SK-N-SH (cell line): ENCODE measurements at regions of chr12 and their contacts with region 1.

Region 1: GRCh38 chr12:107884769-107885694 is 110.5 kb downstream of the ASCL4 start:
- DNase-seq: peak; percentile 74
- H3K4me3 ChIP-seq: no peak overlapping the region
- H3K27ac ChIP-seq: no peak overlapping the region
- H3K4me1 ChIP-seq: peaks cover 0 to 2% of the 10 kb centered on the region in 2 experiments; a peak in 1 of 4 replicates
- H3K27me3 ChIP-seq: 0 out of 2 replicates have a peak, but pooled peaks cover 5% of the 10 kb centered on the region
- CTCF ChIP-seq: peak; percentile 88
- EP300 ChIP-seq: no peak
- RAD21 ChIP-seq: peak; percentile 91

Region 2: GRCh38 chr12:107670999-107671643 is 213.9 kb before region 1 on chr12:
- CTCF ChIA-PET with region 1: interaction called, 19 read pairs
- POLR2A ChIA-PET with region 1: interaction called, 5 read pairs
- DNase-seq: no peak
- H3K4me3 ChIP-seq: no peak overlapping the region
- H3K27ac ChIP-seq: no peak overlapping the region
- H3K4me1 ChIP-seq: peaks cover 0 to 6% of the 10 kb centered on the region in 2 experiments; a peak in 1 of 4 replicates
- H3K27me3 ChIP-seq: no peaks in the 10 kb centered on the region; the same call in 1 of the 2 replicates
- CTCF ChIP-seq: peak; percentile 37
- EP300 ChIP-seq: no peak
- RAD21 ChIP-seq: no peak

Region 3: GRCh38 chr12:107679336-107679735 is 205.7 kb before region 1 on chr12:
- CTCF ChIA-PET with region 1: interaction called, 19 read pairs
- POLR2A ChIA-PET with region 1: interaction called, 5 read pairs
- DNase-seq: no peak
- H3K4me3 ChIP-seq: no peak overlapping the region
- H3K27ac ChIP-seq: no peak overlapping the region
- H3K4me1 ChIP-seq: no peaks in the 10 kb centered on the region
- H3K27me3 ChIP-seq: peaks cover 11% of the 10 kb centered on the region; the same call in 1 of the 2 replicates
- CTCF ChIP-seq: no peak
- EP300 ChIP-seq: no peak
- RAD21 ChIP-seq: no peak

Region 4: GRCh38 chr12:107760809-107761501 is 124.1 kb before region 1 on chr12 and contains the start of gene PRDM4:
- CTCF ChIA-PET with region 1: interaction called, 68 read pairs
- POLR2A ChIA-PET with region 1: no interaction called
- DNase-seq: peak; percentile 99
- H3K4me3 ChIP-seq: peak within 1 kb of the TSS; percentile 82 to 89
- H3K27ac ChIP-seq: peak within 1 kb of the TSS; percentile 71 to 74
- H3K4me1 ChIP-seq: peaks cover 10 to 15% of the 10 kb centered on the region in 2 experiments; a peak in 2 of 4 replicates
- H3K27me3 ChIP-seq: no peaks in the 10 kb centered on the region
- CTCF ChIP-seq: peak; percentile 31
- EP300 ChIP-seq: no peak; a peak in 1 of 4 replicates
- RAD21 ChIP-seq: peak; percentile 64
- polyA plus RNA-seq, gene PRDM4: 22.1 and 27.9 TPM in 2 replicates

Region 5: GRCh38 chr12:107873223-107873622 is 11.8 kb before region 1 on chr12:
- CTCF ChIA-PET with region 1: interaction called, 11 read pairs
- POLR2A ChIA-PET with region 1: no interaction called
- DNase-seq: no peak
- H3K4me3 ChIP-seq: no peak overlapping the region
- H3K27ac ChIP-seq: no peak overlapping the region
- H3K4me1 ChIP-seq: no peaks in the 10 kb centered on the region
- H3K27me3 ChIP-seq: no peaks in the 10 kb centered on the region
- CTCF ChIP-seq: no peak
- EP300 ChIP-seq: no peak
- RAD21 ChIP-seq: no peak

Region 6: GRCh38 chr12:107895966-107896365 is 10.9 kb after region 1 on chr12:
- CTCF ChIA-PET with region 1: interaction called, 11 read pairs
- POLR2A ChIA-PET with region 1: no interaction called
- DNase-seq: no peak
- H3K4me3 ChIP-seq: no peak overlapping the region
- H3K27ac ChIP-seq: no peak overlapping the region
- H3K4me1 ChIP-seq: no peaks in the 10 kb centered on the region; a peak in 3 of 4 replicates
- H3K27me3 ChIP-seq: no peaks in the 10 kb centered on the region
- CTCF ChIP-seq: no peak
- EP300 ChIP-seq: no peak
- RAD21 ChIP-seq: no peak

Region 7: DNA sequence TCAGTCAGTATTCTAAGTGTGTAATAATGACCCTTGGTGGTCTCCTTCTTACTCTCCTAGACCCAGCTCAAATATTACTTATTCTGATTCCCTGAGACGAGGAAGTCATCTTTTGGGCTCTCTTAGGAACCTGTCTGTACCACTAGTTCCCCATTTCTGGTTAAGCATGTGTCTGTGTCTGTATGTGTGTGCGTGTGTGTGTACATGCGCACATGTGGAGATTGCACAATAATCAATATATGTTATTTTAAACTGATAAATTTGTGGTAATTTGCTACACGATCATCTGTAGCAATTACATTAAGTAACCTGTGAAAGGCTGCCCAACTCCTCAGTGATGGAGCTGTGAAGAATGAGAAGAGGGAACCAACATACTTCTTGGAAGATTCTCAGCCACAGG is 21.7 kb after region 1 on chr12:
- CTCF ChIA-PET with region 1: interaction called, 10 read pairs
- POLR2A ChIA-PET with region 1: no interaction called
- DNase-seq: no peak
- H3K4me3 ChIP-seq: no peak overlapping the region
- H3K27ac ChIP-seq: no peak overlapping the region
- H3K4me1 ChIP-seq: peaks cover 0 to 3% of the 10 kb centered on the region in 2 experiments; a peak in 1 of 4 replicates
- H3K27me3 ChIP-seq: no peaks in the 10 kb centered on the region
- CTCF ChIP-seq: no peak
- EP300 ChIP-seq: no peak
- RAD21 ChIP-seq: no peak

Region 8: GRCh38 chr12:108190529-108190928 is 305.5 kb after region 1 on chr12:
- CTCF ChIA-PET with region 1: no interaction called
- POLR2A ChIA-PET with region 1: no interaction called
- DNase-seq: no peak
- H3K4me3 ChIP-seq: no peak overlapping the region
- H3K27ac ChIP-seq: no peak overlapping the region; a peak in 1 of 4 replicates
- H3K4me1 ChIP-seq: peaks cover 0 to 27% of the 10 kb centered on the region in 2 experiments; a peak in 1 of 4 replicates
- H3K27me3 ChIP-seq: no peaks in the 10 kb centered on the region
- CTCF ChIP-seq: no peak
- EP300 ChIP-seq: no peak
- RAD21 ChIP-seq: no peak